Activated CD8-positive, alpha-beta T cell treated with anti-CD3 and anti-CD28 coated beads for 36 hours (primary cell): ENCODE measurements at regions of chr11 and their contacts with region 1.

Region 1: DNA sequence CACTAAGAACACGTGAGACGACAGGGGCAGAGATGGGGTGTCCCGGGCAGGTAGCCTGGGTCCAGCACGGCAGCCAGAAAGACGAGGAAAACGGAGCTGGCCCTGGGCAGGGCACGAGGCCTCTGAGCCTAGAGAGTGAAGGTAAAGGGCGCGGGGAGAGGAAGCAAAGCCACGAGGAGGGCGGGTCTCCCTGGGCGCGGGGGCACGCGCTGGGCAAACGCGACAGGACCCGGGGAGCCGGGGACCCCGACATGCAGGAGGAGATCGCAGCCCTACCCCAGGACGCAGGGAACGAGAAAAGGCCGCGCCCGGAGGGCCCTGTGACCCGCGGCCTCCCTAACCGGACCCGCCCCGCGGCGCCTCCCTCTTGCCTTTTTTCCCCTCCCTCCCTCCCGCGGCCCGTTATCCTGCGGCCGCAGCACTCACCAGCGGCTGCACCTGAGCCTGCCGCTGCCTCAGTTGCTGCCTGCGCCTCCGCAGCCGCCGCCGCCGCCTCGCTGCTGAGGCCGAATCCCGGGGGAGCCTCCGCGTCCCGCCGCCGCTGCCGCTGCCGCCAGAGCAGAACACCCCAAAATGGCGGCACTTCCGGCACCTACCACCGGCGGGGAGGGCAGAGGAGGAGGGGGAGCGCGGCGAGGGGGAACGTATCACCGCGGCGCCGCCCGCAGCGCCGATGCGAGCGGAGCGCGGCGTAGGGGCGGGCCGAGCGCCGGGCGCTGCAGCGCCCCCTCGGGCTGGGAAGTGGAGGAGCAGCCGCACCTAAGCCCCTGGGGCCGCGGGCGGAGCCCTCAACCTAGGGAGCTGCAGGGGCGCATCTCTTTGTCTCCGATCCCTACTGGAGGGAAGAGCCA is at the start of gene CELF1:
- DNase-seq: peak; percentile 94
- ATAC-seq: peak; percentile 96
- H3K4me3 Mint-ChIP-seq: peak within 1 kb of the TSS; percentile 92
- H3K27ac Mint-ChIP-seq: peak within 1 kb of the TSS; percentile 92
- H3K4me1 Mint-ChIP-seq: peaks cover 39% of the 10 kb centered on the region
- H3K27me3 Mint-ChIP-seq: no peaks in the 10 kb centered on the region
- CTCF ChIP-seq: peak; percentile 99
- total RNA-seq, gene CELF1: 120 to 122 TPM

Region 2: DNA sequence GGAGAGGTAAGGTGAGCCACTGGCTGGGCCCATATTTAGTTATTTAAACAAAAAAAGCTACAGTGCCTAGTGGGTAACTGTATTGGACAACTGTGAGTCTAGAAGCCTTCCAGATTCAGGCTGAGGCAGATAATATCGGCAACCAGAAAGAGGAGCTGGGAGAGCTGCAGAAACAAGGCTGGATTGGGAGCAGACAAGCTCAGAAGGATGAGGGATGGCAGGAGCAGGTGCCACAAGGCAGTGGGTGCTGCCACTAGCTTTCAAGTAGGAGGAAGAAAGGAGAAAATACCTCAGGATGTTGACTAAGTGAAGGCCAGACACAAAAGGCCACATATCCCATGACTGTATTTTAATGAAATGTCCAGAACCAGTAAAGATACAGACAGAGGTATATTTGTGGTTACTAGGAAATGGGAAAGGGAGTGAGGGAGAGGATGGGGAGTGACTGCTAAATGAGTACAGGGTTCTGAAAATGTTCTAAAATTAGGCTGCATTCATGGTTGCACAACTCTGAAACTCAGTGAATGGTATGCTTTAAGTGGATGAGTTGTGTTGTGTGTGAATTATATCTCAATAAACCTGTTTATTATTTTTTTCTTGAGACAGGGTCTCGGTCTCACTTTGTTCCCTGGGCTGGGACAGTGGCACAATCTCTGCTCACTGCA is 92.1 kb before region 1 on chr11:
- CTCF ChIA-PET with region 1: no interaction called
- POLR2A ChIA-PET with region 1: no interaction called
- intact Hi-C with region 1: no loop called
- DNase-seq: no peak
- ATAC-seq: no peak
- H3K4me3 Mint-ChIP-seq: no peak overlapping the region
- H3K27ac Mint-ChIP-seq: peak overlapping the region; percentile 56
- H3K4me1 Mint-ChIP-seq: no peaks in the 10 kb centered on the region
- H3K27me3 Mint-ChIP-seq: no peaks in the 10 kb centered on the region
- CTCF ChIP-seq: no peak

Region 3: GRCh38 chr11:47514825-47515647 is 37.8 kb before region 1 on chr11:
- CTCF ChIA-PET with region 1: interaction called, 7 read pairs
- POLR2A ChIA-PET with region 1: interaction called, 8 read pairs
- intact Hi-C with region 1: loop called (anchors 5 kb)
- DNase-seq: peak; percentile 70
- ATAC-seq: peak; percentile 97
- H3K4me3 Mint-ChIP-seq: no peak overlapping the region
- H3K27ac Mint-ChIP-seq: peak overlapping the region; percentile 35
- H3K4me1 Mint-ChIP-seq: peaks cover 85% of the 10 kb centered on the region
- H3K27me3 Mint-ChIP-seq: no peaks in the 10 kb centered on the region
- CTCF ChIP-seq: no peak

Region 4: GRCh38 chr11:47538741-47539574 is 13.8 kb before region 1 on chr11:
- CTCF ChIA-PET with region 1: interaction called, 44 read pairs
- POLR2A ChIA-PET with region 1: interaction called, 14 read pairs
- intact Hi-C with region 1: no loop called
- DNase-seq: no peak
- ATAC-seq: no peak
- H3K4me3 Mint-ChIP-seq: no peak overlapping the region
- H3K27ac Mint-ChIP-seq: peak overlapping the region; percentile 77
- H3K4me1 Mint-ChIP-seq: peaks cover 58% of the 10 kb centered on the region
- H3K27me3 Mint-ChIP-seq: no peaks in the 10 kb centered on the region
- CTCF ChIP-seq: no peak

Region 5: DNA sequence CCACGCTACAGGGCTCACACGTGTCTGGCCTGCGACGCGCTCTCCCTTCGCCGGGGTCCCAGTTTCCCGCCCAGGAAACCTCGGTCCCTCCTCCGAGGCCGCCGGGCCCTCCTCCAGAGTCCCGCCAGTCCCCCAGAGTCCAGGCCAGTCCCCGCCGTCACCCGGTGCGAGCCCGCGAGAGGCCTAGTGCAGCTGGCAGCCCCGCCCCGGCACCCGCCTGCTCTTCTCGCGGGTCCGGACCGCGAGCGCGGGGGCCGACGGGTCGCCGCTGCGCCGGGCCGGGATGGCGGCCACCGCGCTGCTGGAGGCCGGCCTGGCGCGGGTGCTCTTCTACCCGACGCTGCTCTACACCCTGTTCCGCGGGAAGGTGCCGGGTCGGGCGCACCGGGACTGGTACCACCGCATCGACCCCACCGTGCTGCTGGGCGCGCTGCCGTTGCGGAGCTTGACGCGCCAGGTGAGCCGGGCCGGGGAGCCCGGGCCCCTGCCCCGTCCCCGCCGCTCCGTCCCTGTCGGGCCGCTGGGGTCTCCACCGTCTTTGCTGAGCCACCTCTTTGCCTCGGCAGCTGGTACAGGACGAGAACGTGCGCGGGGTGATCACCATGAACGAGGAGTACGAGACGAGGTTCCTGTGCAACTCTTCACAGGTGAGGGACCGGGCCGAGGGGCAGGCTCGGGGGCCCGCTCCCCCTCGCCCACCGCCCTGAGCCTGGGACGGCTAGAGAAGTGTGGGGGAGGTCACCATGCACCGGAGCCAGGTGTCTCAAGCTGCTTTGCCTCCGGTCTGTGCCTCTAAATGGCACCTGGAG is 12.8 kb after region 1 on chr11 and contains the start of gene PTPMT1:
- CTCF ChIA-PET with region 1: interaction called, 12 read pairs
- POLR2A ChIA-PET with region 1: interaction called, 29 read pairs
- intact Hi-C with region 1: no loop called
- DNase-seq: peak; percentile 82
- ATAC-seq: peak; percentile 88
- H3K4me3 Mint-ChIP-seq: peak within 1 kb of the TSS; percentile 83
- H3K27ac Mint-ChIP-seq: peak within 1 kb of the TSS; percentile 83
- H3K4me1 Mint-ChIP-seq: peaks cover 28% of the 10 kb centered on the region
- H3K27me3 Mint-ChIP-seq: no peaks in the 10 kb centered on the region
- CTCF ChIP-seq: no peak
- total RNA-seq, gene PTPMT1: 44.1 to 46.7 TPM

Region 6: GRCh38 chr11:47578524-47579460 is 26.0 kb after region 1 on chr11 and contains the starts of genes KBTBD4 and NDUFS3:
- CTCF ChIA-PET with region 1: interaction called, 5 read pairs
- POLR2A ChIA-PET with region 1: interaction called, 11 read pairs
- intact Hi-C with region 1: no loop called
- DNase-seq: peak; percentile 90
- ATAC-seq: peak; percentile 95
- H3K4me3 Mint-ChIP-seq: peak within 1 kb of the TSS; percentile 92
- H3K27ac Mint-ChIP-seq: peak within 1 kb of the TSS; percentile 98
- H3K4me1 Mint-ChIP-seq: peaks cover 34% of the 10 kb centered on the region
- H3K27me3 Mint-ChIP-seq: no peaks in the 10 kb centered on the region
- CTCF ChIP-seq: no peak
- total RNA-seq, gene KBTBD4: 15.4 to 16.3 TPM
- total RNA-seq, gene NDUFS3: 129 to 138 TPM